Activated naive CD4-positive, alpha-beta T cell treated with anti-CD3 and anti-CD28 coated beads for 36 hours (primary cell): ENCODE measurements at regions of chr16 and their contacts with region 1.

Region 1: DNA sequence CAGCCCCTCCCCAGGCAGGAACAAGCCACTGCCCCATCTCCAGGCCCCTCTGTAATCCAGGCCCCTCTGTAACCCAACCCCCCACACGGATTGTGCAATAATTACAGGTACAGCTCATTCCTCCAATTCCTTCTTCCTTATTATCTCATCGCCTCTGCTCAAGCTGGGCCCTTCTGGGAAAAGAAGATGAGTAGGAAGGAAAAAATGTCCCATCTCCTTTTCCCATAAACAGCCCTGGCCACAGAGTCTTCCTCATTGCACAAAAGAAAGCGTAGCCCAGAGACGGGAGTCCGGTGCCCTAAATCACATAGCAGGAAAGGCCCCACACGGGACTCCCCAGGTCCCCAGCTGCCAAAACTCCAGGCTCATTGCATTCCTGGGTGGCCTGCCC is 3.6 kb upstream of the LITAFD start:
- DNase-seq: no peak
- H3K4me3 Mint-ChIP-seq: no peak overlapping the region
- H3K27ac Mint-ChIP-seq: no peak overlapping the region
- H3K4me1 Mint-ChIP-seq: peaks cover 11% of the 10 kb centered on the region
- H3K27me3 Mint-ChIP-seq: no peaks in the 10 kb centered on the region

Region 2: DNA sequence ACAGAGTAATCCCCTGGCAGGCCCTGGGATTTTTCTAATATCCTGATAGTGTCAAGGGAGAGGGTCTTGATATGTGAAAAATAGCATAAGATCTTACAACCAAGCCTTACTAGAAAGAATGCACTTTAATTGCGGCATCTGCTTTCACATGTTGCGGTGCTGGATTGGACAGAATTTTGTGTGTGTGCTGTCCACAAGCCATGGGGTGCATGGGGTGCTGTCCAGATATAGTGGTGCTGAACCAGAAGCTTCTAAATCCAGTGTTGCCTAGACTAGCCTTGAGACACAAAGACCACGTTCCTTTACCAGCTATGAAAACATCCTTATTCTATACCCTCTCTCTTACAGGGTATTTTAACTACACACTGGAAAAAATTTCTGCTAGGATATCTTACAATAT is 532.2 kb before region 1 on chr16:
- CTCF ChIA-PET with region 1: no interaction called
- intact Hi-C with region 1: no loop called
- DNase-seq: peak; percentile 4
- H3K4me3 Mint-ChIP-seq: no peak overlapping the region
- H3K27ac Mint-ChIP-seq: no peak overlapping the region
- H3K4me1 Mint-ChIP-seq: no peaks in the 10 kb centered on the region
- H3K27me3 Mint-ChIP-seq: no peaks in the 10 kb centered on the region

Region 3: GRCh38 chr16:8655184-8655717 is 223.3 kb before region 1 on chr16:
- CTCF ChIA-PET with region 1: interaction called, 14 read pairs
- intact Hi-C with region 1: no loop called
- DNase-seq: peak; percentile 66
- H3K4me3 Mint-ChIP-seq: no peak overlapping the region
- H3K27ac Mint-ChIP-seq: no peak overlapping the region
- H3K4me1 Mint-ChIP-seq: peaks cover 5% of the 10 kb centered on the region
- H3K27me3 Mint-ChIP-seq: no peaks in the 10 kb centered on the region

Region 4: GRCh38 chr16:8674413-8675022 is 204.0 kb before region 1 on chr16 and contains the start of gene ABAT:
- CTCF ChIA-PET with region 1: interaction called, 10 read pairs
- intact Hi-C with region 1: no loop called
- DNase-seq: peak; percentile 85
- H3K4me3 Mint-ChIP-seq: peak within 1 kb of the TSS; percentile 79
- H3K27ac Mint-ChIP-seq: peak within 1 kb of the TSS; percentile 57
- H3K4me1 Mint-ChIP-seq: peaks cover 17% of the 10 kb centered on the region
- H3K27me3 Mint-ChIP-seq: no peaks in the 10 kb centered on the region
- total RNA-seq, gene ABAT: 2.7 to 3.1 TPM

Region 5: DNA sequence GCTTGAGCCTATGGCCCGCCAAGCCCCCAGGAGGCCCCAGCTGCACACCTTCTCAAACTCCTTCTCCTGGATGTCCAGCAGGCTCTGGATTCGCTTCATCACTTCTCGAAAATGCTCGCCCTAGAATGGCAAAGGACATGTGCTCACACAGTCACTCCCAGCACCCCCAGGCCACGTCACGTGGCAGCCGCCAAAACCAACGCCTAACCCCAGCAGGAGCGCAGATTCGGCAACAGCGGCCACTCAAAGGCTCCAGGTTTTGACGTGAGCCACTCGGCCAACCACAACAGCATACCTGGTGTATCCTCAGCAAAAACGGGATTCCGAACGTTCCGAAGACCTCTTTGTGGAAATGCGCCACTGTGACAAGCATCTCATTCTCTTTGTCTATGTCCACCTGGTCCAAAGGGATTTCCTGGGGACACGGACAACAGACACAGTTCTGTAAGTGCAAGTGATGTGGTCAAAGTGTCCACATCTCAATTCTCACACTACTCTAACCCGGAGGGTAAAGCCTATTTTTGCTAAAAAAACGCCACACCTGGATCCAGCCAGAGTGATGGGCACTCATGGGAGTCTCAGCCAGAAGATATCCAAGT is 16.3 kb after region 1 on chr16:
- CTCF ChIA-PET with region 1: interaction called, 12 read pairs
- intact Hi-C with region 1: no loop called
- DNase-seq: no peak
- H3K4me3 Mint-ChIP-seq: no peak overlapping the region
- H3K27ac Mint-ChIP-seq: no peak overlapping the region
- H3K4me1 Mint-ChIP-seq: peaks cover 2% of the 10 kb centered on the region
- H3K27me3 Mint-ChIP-seq: no peaks in the 10 kb centered on the region

Region 6: GRCh38 chr16:9134739-9135138 is 256.2 kb after region 1 on chr16:
- CTCF ChIA-PET with region 1: interaction called, 5 read pairs
- intact Hi-C with region 1: loop called (anchors 2 kb)
- DNase-seq: peak; percentile 85
- H3K4me3 Mint-ChIP-seq: no peak overlapping the region
- H3K27ac Mint-ChIP-seq: no peak overlapping the region
- H3K4me1 Mint-ChIP-seq: peaks cover 7% of the 10 kb centered on the region
- H3K27me3 Mint-ChIP-seq: peaks cover 4% of the 10 kb centered on the region